Endothelial cell of umbilical vein (primary cell): ENCODE measurements at regions of chr15 and their contacts with region 1.

Region 1: GRCh38 chr15:66851226-66852071 is 149.4 kb downstream of the SMAD6 start:
- DNase-seq: peak; percentile 78
- H3K4me3 ChIP-seq: no peak overlapping the region
- H3K27ac ChIP-seq: no peak overlapping the region
- H3K4me1 ChIP-seq: peaks cover 14% of the 10 kb centered on the region
- H3K27me3 ChIP-seq: no peaks in the 10 kb centered on the region
- CTCF ChIP-seq: peak; percentile 91 to 99
- POLR2A ChIP-seq: peak; percentile 37

Region 2: GRCh38 chr15:66504563-66505429 is 346.7 kb before region 1 on chr15 and contains the starts of genes RPL4 and ZWILCH:
- CTCF ChIA-PET with region 1: interaction called, 3 read pairs
- POLR2A ChIA-PET with region 1: no interaction called
- dilution Hi-C with region 1: no loop called
- intact Hi-C with region 1: loop called (anchors 5 kb)
- DNase-seq: peak; percentile 86
- H3K4me3 ChIP-seq: peak within 1 kb of the TSS; percentile 93 to 98 (median 98)
- H3K27ac ChIP-seq: peak within 1 kb of the TSS; percentile 96
- H3K4me1 ChIP-seq: peaks cover 28% of the 10 kb centered on the region
- H3K27me3 ChIP-seq: no peaks in the 10 kb centered on the region
- CTCF ChIP-seq: no peak
- POLR2A ChIP-seq: peak; percentile 79
- total RNA-seq, gene RPL4: 2,534 and 2,598 TPM in 2 replicates
- total RNA-seq, gene ZWILCH: 28.8 and 29.8 TPM in 2 replicates

Region 3: DNA sequence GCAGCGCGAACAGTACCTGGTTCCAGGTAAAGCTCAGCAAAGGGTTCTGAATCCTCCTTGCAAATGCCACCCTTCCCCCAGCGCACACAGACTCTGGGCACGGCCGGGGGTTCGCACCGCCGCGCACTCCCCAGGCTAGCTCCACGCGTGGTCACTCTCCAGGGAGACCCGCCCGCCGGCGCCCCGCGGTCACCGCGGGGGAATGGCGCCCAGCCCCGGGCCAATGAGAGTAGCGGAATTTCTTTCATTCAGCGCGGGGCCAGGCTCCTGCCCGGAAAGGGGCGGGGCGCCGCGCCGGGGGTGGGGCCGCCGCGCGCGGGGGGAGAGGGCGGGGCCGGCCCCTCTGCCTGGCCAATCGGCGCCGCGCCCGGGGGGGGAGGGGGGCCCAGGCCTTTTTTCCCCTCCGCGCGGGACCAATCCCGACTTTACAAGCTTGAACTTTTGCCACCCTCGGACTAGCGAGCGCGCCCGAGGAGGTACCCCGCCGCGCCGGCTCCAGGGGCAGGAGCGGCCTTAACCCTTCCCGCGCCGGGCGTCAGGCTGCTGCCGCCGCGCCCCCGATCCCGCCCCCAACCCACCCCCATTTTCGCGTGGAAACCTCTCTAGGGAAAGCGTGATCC is 150.5 kb before region 1 on chr15:
- CTCF ChIA-PET with region 1: interaction called, 157 read pairs
- POLR2A ChIA-PET with region 1: interaction called, 4 read pairs
- dilution Hi-C with region 1: no loop called
- intact Hi-C with region 1: loop called (anchors 1 kb)
- DNase-seq: peak; percentile 94
- H3K4me3 ChIP-seq: peak overlapping the region; percentile 8 to 79 (median 46)
- H3K27ac ChIP-seq: peak overlapping the region; percentile 92
- H3K4me1 ChIP-seq: peaks cover 28% of the 10 kb centered on the region
- H3K27me3 ChIP-seq: no peaks in the 10 kb centered on the region
- CTCF ChIP-seq: no peak
- POLR2A ChIP-seq: peak; percentile 48

Region 4: DNA sequence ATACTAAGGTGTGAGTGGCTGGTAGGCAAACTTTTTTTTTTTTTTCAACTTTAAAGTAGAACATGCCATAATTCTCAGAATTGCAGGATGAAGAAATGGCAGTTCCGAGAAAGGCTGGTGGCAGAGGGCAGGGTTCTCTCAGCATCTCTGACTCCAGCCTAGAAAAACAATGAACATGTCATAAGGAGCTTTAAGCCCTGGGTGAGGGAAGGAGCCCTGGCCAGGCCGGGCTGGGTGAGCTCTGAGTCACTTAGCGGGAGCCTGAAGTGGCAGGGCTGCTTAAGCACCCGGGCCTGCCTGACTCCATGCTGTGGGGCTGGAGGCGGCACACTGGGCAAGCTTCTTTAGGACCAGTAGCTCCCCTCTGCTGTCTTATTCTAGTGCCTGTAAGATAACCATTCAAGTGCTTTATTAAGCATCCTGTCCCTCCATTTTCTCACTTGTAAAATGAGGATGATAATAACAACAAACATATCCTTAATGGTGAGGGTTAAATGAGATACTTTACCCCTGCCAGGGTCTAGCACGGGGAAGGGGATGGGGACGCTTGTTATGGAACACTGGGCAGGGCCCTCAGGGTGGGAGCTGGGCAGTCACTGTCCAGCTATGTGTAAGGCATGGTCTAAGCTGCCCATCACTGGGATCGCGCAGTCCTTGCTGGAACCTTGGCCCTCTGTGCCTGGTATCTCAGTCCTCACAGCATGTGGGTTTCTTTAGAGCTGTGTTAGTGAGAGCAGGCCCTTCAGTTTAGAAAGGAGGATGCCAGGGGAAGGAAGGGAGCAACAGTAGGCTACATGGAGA is 131.0 kb before region 1 on chr15:
- CTCF ChIA-PET with region 1: interaction called, 14 read pairs
- POLR2A ChIA-PET with region 1: no interaction called
- dilution Hi-C with region 1: no loop called
- intact Hi-C with region 1: no loop called
- DNase-seq: peak; percentile 56
- H3K4me3 ChIP-seq: no peak overlapping the region
- H3K27ac ChIP-seq: peak overlapping the region; percentile 11
- H3K4me1 ChIP-seq: peaks cover 53% of the 10 kb centered on the region
- H3K27me3 ChIP-seq: no peaks in the 10 kb centered on the region
- CTCF ChIP-seq: no peak
- POLR2A ChIP-seq: no peak

Region 5: DNA sequence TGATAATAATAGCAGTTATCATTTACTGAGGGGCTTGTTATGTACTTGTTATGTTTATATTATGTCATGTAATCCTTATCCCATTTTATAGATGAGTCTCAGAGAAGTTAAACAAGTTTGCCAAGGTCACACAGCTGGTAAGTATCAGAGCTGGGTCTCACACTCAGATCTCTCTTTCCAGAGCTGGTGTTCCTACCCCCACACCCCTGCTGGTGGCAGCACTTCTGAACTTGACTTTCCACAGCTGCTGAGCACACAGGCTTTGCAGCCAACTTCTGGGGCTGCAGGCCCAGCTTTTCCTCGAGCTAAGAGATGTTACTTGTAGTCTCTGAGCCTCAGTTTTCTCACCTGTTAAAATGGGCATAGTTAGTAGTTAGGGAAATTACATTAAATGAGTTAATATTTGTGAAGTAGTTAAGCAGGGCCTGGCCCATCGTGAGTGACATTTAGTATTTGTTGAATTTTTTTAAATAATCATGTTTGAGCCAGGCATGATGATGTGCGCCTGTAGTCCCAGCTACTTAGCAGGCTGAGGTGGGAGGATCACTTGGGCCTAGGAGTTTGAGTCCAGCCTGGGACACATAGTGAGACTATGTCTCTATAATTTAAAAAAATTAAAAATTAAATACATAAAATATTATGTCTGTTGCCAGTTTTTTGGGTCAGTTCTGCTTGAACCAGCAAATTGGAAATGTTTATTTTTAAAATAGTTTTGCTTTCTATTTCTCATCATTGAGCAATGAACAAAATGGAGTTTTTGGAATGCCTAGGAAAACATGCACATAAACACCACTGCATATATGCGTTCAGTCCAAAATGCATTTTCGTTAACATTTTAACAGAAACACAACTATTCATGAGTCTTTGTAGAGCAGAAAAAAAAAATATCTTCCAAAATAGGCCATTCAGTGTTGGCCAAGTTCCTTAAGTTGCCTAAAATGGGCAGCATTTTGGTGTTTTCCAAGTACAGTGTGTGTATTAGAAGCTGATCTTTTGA is 62.1 kb before region 1 on chr15:
- CTCF ChIA-PET with region 1: interaction called, 223 read pairs
- POLR2A ChIA-PET with region 1: interaction called, 4 read pairs
- dilution Hi-C with region 1: no loop called
- intact Hi-C with region 1: loop called (anchors 1 kb)
- DNase-seq: peak; percentile 57
- H3K4me3 ChIP-seq: no peak overlapping the region
- H3K27ac ChIP-seq: no peak overlapping the region
- H3K4me1 ChIP-seq: no peaks in the 10 kb centered on the region
- H3K27me3 ChIP-seq: no peaks in the 10 kb centered on the region
- CTCF ChIP-seq: peak; percentile 54 to 67
- POLR2A ChIP-seq: no peak

Region 6: GRCh38 chr15:66862878-66863335 is 11.5 kb after region 1 on chr15:
- CTCF ChIA-PET with region 1: interaction called, 18 read pairs
- POLR2A ChIA-PET with region 1: no interaction called
- dilution Hi-C with region 1: no loop called
- intact Hi-C with region 1: no loop called
- DNase-seq: peak; percentile 85
- H3K4me3 ChIP-seq: no peak overlapping the region
- H3K27ac ChIP-seq: no peak overlapping the region
- H3K4me1 ChIP-seq: no peaks in the 10 kb centered on the region
- H3K27me3 ChIP-seq: no peaks in the 10 kb centered on the region
- CTCF ChIP-seq: peak; percentile 87 to 94
- POLR2A ChIP-seq: no peak

Region 7: GRCh38 chr15:66931768-66932633 is 80.6 kb after region 1 on chr15:
- CTCF ChIA-PET with region 1: no interaction called
- POLR2A ChIA-PET with region 1: no interaction called
- dilution Hi-C with region 1: no loop called
- intact Hi-C with region 1: no loop called
- DNase-seq: peak; percentile 58
- H3K4me3 ChIP-seq: no peak overlapping the region
- H3K27ac ChIP-seq: peak overlapping the region; percentile 21
- H3K4me1 ChIP-seq: peaks cover 14% of the 10 kb centered on the region
- H3K27me3 ChIP-seq: no peaks in the 10 kb centered on the region
- CTCF ChIP-seq: no peak
- POLR2A ChIP-seq: no peak